Calu3 (cell line): ENCODE measurements at regions of chr14 and their contacts with region 1.

Region 1: DNA sequence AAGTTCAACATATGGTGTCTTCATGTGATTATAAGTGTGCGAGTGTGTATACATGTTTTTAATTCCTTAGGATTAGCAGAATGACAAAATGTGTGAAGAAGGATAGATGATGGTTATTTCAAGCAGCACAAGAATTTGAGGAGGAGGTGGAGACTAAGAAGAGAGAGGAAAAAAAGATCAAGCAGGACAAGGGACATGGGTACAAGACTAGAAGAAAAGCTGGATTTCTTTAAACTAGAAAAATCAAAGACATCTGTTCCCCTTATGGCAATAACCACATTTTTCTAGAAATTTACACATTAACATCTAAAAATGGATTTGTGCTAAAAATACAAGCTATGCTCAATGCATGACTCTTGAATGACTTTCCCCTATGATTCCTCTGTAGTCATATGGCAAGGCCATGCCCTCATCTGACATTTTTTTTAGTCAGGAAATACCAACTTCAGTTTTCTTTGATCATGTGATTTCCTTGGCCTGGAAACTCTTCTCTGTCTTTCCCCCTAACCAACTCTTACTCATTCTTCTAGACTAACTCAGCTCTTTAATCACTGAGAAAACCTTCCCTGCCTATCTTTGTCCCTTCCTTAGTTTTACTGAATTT is 435.8 kb downstream of the NRXN3 start:
- DNase-seq: no peak
- H3K4me3 Mint-ChIP-seq: no peak overlapping the region
- H3K27ac Mint-ChIP-seq: no peak overlapping the region
- H3K4me1 Mint-ChIP-seq: peaks cover 12% of the 10 kb centered on the region
- H3K27me3 Mint-ChIP-seq: peaks cover 25% of the 10 kb centered on the region
- CTCF ChIP-seq: no peak

Region 2: DNA sequence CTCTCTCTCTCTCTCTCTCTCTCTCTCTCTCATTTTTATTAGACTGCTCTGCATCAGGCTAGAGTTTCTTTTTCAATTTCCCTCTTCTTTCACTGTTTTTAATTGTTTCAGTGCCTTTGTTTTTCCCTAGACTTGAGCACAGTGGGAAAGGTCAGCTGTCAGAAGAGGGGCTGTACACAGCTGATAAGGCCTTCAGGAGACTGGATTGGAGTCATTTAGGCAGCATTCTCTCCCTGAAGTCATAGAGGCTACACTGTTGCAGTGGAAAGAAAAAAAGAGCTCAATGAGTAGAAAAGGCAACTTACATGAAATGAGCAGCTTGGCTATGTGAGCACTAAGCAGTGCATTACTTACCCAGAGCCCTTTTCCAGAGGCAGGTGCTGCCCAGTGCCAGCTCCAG is 21.1 kb after region 1 on chr14:
- CTCF ChIA-PET with region 1: interaction called, 12 read pairs
- intact Hi-C with region 1: no loop called
- DNase-seq: no peak
- H3K4me3 Mint-ChIP-seq: no peak overlapping the region
- H3K27ac Mint-ChIP-seq: no peak overlapping the region
- H3K4me1 Mint-ChIP-seq: no peaks in the 10 kb centered on the region
- H3K27me3 Mint-ChIP-seq: peaks cover 50% of the 10 kb centered on the region
- CTCF ChIP-seq: no peak